Activated naive CD4-positive, alpha-beta T cell treated with anti-CD3 and anti-CD28 coated beads for 36 hours (primary cell): ENCODE measurements at regions of chr11 and their contacts with region 1.

Region 1: DNA sequence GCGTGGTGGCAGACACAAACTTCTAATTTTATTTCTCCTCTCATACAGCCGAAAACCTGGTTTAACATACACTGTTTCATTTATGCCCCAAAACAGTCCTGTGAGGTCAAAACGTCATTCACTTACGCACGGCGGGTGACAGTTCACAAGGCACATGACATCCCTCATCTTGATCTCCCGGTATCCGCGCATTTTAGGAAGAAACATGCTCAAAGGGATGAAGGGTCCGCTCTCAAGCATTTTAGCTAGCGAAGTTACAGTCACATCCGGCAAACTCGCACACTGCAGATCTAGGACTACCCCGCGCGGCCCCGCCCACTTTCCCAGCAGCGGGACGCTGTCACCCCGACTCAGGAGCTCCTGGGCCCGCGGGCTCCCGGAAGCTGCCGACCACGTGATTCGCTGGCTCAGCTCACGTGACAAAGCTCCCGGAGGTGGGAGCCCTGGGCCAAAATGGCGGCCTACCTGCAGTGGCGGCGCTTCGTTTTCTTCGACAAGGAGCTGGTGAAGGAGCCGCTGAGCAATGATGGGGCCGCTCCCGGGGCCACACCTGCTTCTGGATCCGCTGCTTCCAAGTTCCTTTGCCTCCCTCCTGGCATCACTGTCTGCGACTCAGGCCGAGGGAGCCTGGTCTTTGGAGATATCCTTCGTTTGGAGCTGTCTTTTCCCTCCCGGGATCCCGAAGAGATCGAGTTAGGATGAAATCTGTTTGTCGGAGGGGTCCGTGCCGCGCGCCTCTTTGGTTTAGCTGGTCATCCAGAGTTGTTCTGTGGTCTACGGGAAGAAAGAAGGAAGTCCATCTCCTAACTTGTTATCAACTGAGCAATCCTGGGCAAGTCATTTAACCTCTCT is at the start of gene VPS11:
- DNase-seq: peak; percentile 99
- H3K4me3 Mint-ChIP-seq: peak within 1 kb of the TSS; percentile 91
- H3K27ac Mint-ChIP-seq: peak within 1 kb of the TSS; percentile 96
- H3K4me1 Mint-ChIP-seq: peaks cover 37% of the 10 kb centered on the region
- H3K27me3 Mint-ChIP-seq: no peaks in the 10 kb centered on the region
- total RNA-seq, gene VPS11: 16.9 to 19.5 TPM

Region 2: DNA sequence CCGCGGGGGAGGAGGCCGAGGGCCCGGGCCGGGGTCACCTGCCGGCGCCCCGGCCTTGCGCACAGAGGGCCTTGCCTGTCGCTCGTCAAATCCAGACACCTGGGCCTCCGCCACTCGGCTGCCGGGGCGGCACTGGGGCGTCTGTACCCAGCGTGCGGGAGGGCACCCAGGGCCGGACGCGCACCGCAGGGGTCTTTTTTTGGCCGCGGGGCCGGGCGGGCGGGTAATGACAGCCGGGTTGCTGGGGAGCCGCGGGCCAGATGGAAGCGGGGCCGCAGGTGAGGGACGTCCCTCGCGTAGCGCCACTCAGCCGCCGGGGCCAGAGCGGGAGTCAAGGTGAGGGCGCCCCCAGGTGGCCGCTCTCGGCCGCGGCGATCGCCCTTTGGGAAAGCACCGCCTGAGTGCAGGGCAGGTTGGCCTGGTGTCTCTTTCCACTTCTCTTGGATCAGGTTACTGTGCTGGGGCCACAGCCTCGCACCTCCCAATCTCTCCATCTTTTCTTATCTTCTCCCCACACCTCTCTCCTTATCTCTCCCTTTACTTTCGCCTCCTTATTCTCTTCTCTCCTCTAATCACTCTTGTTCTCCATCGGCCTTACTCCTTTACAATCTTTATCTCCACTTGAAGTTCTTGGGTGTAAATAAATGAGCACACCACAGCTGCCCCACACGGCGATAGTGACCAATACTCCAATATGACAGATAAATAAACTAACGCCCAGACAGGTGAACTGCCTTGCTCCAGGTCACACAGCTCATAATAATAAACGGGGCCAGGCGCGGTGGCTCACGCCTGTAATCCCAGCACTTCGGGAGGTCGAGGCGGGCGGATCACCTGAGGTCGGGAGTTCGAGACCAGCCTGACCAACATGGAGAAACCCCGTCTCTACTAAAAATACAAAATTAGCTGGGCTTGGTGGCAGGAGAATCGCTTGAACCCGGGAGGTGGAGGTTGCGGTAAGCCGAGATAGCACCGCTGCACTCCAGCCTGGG is 456.5 kb before region 1 on chr11:
- CTCF ChIA-PET with region 1: no interaction called
- intact Hi-C with region 1: no loop called
- DNase-seq: peak; percentile 90
- H3K4me3 Mint-ChIP-seq: peak overlapping the region; percentile 51
- H3K27ac Mint-ChIP-seq: no peak overlapping the region
- H3K4me1 Mint-ChIP-seq: peaks cover 20% of the 10 kb centered on the region
- H3K27me3 Mint-ChIP-seq: peaks cover 17% of the 10 kb centered on the region

Region 3: GRCh38 chr11:118997627-118998387 is 69.8 kb before region 1 on chr11 and contains the start of gene CENATAC:
- CTCF ChIA-PET with region 1: no interaction called
- intact Hi-C with region 1: loop called (anchors 1 kb)
- DNase-seq: peak; percentile 98
- H3K4me3 Mint-ChIP-seq: peak within 1 kb of the TSS; percentile 88
- H3K27ac Mint-ChIP-seq: peak within 1 kb of the TSS; percentile 96
- H3K4me1 Mint-ChIP-seq: peaks cover 33% of the 10 kb centered on the region
- H3K27me3 Mint-ChIP-seq: no peaks in the 10 kb centered on the region
- total RNA-seq, gene CENATAC: 17.4 to 18.0 TPM

Region 4: DNA sequence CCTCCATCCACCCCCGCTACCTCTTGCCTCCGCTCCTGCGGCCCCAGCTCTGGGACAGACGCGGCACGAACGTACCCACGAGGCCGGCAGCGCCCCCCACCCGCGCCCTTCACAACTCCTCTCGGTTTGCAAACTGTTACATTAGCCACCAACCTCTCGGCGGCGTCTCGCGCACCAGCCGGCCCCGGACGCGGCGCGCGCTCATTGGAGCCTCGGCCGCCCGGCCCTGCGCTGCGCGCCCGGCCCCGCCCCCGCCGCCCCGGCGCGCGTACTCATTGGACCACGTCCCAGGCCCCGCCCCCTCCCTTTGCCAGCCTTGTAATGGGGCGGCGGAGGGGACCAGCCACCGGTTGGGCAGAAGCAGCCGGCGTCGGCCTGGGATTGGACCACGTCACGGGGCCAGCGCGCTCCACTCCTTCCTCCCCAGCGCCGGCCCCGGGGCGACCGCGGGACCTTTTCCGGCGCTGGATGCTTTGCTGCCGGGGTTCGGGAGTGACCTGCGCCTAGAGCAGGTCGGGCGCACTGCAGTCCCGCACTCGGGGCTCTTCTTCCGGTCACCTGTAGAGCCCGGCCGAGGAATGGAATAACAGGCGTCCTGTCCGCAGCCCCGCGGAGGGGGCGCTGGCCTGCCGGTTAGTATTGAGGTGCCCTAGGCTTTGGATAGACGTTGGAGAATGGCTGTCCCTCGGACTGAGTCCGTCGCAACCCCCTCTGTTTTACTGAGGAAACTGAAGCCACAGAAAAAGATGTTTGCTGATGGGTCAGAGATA is 10.4 kb before region 1 on chr11 and contains the start of gene HYOU1:
- CTCF ChIA-PET with region 1: interaction called, 13 read pairs
- intact Hi-C with region 1: loop called (anchors 1 kb)
- DNase-seq: peak; percentile 99
- H3K4me3 Mint-ChIP-seq: peak within 1 kb of the TSS; percentile 98
- H3K27ac Mint-ChIP-seq: peak within 1 kb of the TSS; percentile 95
- H3K4me1 Mint-ChIP-seq: peaks cover 53% of the 10 kb centered on the region
- H3K27me3 Mint-ChIP-seq: no peaks in the 10 kb centered on the region
- total RNA-seq, gene HYOU1: 108 to 116 TPM

Region 5: GRCh38 chr11:119168471-119169281 is 101.1 kb after region 1 on chr11 and contains the start of gene NLRX1:
- CTCF ChIA-PET with region 1: interaction called, 3 read pairs
- intact Hi-C with region 1: loop called (anchors 1 kb)
- DNase-seq: peak; percentile 92
- H3K4me3 Mint-ChIP-seq: peak within 1 kb of the TSS; percentile 92
- H3K27ac Mint-ChIP-seq: peak within 1 kb of the TSS; percentile 82
- H3K4me1 Mint-ChIP-seq: peaks cover 6% of the 10 kb centered on the region
- H3K27me3 Mint-ChIP-seq: no peaks in the 10 kb centered on the region
- total RNA-seq, gene NLRX1: 20.8 to 22.2 TPM

Region 6: GRCh38 chr11:119181677-119182412 is 114.2 kb after region 1 on chr11:
- CTCF ChIA-PET with region 1: no interaction called
- intact Hi-C with region 1: no loop called
- DNase-seq: no peak
- H3K4me3 Mint-ChIP-seq: no peak overlapping the region
- H3K27ac Mint-ChIP-seq: no peak overlapping the region
- H3K4me1 Mint-ChIP-seq: peaks cover 17% of the 10 kb centered on the region
- H3K27me3 Mint-ChIP-seq: no peaks in the 10 kb centered on the region

Region 7: DNA sequence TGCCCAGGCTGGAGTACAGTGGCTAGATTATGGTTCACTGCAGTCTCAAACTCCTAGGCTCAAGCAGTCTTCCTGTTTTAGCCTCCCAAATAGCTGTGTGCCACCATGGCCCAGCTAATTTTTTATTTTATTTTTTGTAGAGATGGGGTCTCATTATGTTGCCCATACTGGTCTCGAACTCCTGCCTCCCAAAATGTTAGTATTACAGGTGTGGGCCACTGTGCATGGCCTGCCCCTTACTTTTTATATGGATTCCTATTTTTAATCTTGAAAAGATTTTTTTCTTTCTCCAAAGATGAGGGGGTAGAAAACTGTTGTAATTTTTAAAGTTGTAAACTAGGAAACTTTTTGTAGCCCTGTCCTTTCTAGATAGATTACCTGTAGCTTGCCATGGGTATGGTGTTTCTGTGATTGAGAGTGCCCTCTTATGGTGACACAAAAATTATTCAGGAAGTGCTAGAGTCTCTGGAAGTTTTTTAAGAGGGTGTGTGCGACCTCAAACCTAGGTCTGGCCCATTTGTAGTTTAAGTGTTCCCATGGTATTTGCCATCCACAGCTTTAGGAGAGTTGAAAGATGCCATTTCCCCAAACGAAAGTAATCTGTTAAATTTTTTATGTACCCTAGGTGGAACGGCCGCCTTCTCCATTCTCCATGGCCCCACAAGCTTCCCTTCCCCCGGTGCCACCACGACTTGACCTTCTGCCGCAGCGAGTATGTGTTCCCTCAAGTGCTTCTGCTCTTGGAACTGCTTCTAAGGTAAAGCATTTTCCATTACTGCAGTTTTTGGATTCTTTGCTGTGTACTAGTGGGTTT is 217.0 kb after region 1 on chr11:
- CTCF ChIA-PET with region 1: no interaction called
- intact Hi-C with region 1: loop called (anchors 1 kb)
- DNase-seq: peak; percentile 29
- H3K4me3 Mint-ChIP-seq: no peak overlapping the region
- H3K27ac Mint-ChIP-seq: no peak overlapping the region
- H3K4me1 Mint-ChIP-seq: peaks cover 16% of the 10 kb centered on the region
- H3K27me3 Mint-ChIP-seq: no peaks in the 10 kb centered on the region